Body of pancreas (tissue), 4 donors: ENCODE measurements at regions of chr2 and their contacts with region 1.

Region 1: GRCh38 chr2:206159346-206160124 is at the starts of genes EEF1B2 and NDUFS1:
- DNase-seq: peak; percentile 96 to 98 (median 98)
- ATAC-seq: peak; percentile 98
- H3K4me3 ChIP-seq: peak within 1 kb of the TSS; percentile 86 to 95
- H3K27ac ChIP-seq: peak within 1 kb of the TSS; percentile 81 to 95 (median 90)
- H3K4me1 ChIP-seq: peaks cover 33% of the 10 kb centered on the region
- H3K27me3 ChIP-seq: no peaks in the 10 kb centered on the region
- CTCF ChIP-seq: peak in 2 of 7 experiments; percentile 1 to 5
- POLR2A ChIP-seq: peak; percentile 34 to 75 (median 75)
- total RNA-seq, gene EEF1B2: 174 to 397 TPM
- total RNA-seq, gene NDUFS1: 18.7 to 24.1 TPM

Region 2: DNA sequence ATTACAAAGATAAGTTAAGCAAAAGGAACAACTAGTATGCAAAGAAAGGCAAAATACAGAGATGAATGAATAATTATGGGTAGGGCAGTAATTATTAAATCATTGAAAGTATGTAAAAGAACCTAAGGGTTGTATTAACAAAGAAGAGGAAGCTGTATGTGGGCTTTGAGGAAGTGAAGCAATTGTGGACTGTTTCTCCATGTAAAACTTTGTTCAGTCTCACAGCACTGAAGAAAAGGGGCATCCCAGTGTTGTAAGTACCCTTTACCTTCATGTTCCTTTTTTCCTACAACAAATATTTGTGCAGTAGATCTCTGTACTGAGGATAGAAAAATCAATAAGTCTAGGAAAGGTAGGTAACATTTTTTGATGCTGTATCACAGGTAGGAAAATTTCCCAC is 866.0 kb before region 1 on chr2:
- intact Hi-C with region 1: no loop called
- DNase-seq: no peak
- ATAC-seq: no peak
- H3K4me3 ChIP-seq: no peak overlapping the region
- H3K27ac ChIP-seq: no peak overlapping the region
- H3K4me1 ChIP-seq: no peaks in the 10 kb centered on the region
- H3K27me3 ChIP-seq: no peaks in the 10 kb centered on the region
- CTCF ChIP-seq: no peak
- POLR2A ChIP-seq: no peak

Region 3: GRCh38 chr2:206079724-206080465 is 79.6 kb before region 1 on chr2:
- intact Hi-C with region 1: loop called (anchors 10 kb)
- DNase-seq: no peak
- ATAC-seq: no peak
- H3K4me3 ChIP-seq: no peak overlapping the region
- H3K27ac ChIP-seq: no peak overlapping the region
- H3K4me1 ChIP-seq: peaks cover 19% of the 10 kb centered on the region
- H3K27me3 ChIP-seq: no peaks in the 10 kb centered on the region
- CTCF ChIP-seq: no peak
- POLR2A ChIP-seq: no peak

Region 4: DNA sequence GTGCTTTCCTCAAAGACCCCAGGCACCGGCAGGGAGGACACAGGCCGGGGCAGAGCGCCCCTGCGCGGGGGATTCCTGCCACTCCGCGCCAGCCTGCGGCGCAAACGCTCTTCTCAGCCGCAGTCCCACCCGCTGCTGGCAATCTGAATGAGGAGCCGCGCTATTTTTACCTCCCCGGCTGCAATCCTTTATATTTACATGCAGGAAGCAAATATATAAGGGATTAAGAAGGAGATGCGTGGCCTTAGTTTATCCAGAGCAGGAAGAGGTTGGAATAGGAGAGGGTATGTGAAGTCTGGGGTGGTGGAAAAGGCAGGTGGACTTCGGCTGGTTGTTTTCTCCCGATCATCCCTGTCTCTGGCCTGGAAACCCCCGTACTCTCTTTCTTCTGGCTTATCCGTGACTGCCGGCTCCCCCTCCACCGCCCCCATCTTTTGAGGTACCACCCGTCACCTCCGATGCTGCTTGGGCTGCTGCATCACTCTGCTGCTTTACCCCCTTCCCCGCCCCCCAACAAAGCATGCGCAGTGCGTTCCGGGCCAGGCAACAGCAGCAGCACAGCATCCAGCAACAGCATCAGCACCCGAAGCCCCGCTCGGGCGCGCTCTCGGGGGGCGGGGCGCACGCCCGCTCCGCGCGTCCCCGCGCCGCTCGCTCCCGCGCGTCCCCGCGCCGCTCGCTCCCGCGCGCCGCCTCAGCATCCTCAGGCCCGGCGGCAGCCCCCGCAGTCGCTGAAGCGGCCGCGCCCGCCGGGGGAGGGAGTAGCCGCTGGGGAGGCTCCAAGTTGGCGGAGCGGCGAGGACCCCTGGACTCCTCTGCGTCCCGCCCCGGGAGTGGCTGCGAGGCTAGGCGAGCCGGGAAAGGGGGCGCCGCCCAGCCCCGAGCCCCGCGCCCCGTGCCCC is 283.5 kb after region 1 on chr2 and contains the start of gene ADAM23:
- intact Hi-C with region 1: no loop called
- DNase-seq: peak in 1 of 4 donors; percentile 25
- ATAC-seq: peak; percentile 50
- H3K4me3 ChIP-seq: no peak within 1 kb of the TSS
- H3K27ac ChIP-seq: no peak within 1 kb of the TSS
- H3K4me1 ChIP-seq: peaks cover 7% of the 10 kb centered on the region
- H3K27me3 ChIP-seq: peaks cover 0 to 4% of the 10 kb centered on the region in 2 donors
- CTCF ChIP-seq: no peak
- POLR2A ChIP-seq: no peak
- total RNA-seq, gene ADAM23: under 0.01 to 0.26 TPM